ENCODE measurements at regions of chr5 and their contacts with region 1.

Region 1: GRCh38 chr5:42057254-42057690 is 132.2 kb downstream of the FBXO4 start:
- DNase-seq: peak; percentile 66
- H3K4me3 Mint-ChIP-seq: no peak overlapping the region
- H3K27ac Mint-ChIP-seq: no peak overlapping the region
- H3K4me1 Mint-ChIP-seq: peaks cover 8% of the 10 kb centered on the region
- H3K27me3 Mint-ChIP-seq: no peaks in the 10 kb centered on the region
- CTCF ChIP-seq: peak; percentile 53

Region 2: GRCh38 chr5:41856644-41857491 is 200.4 kb before region 1 on chr5:
- CTCF ChIA-PET with region 1: interaction called, 32 read pairs
- intact Hi-C with region 1: loop called (anchors 1 kb)
- DNase-seq: peak; percentile 60
- H3K4me3 Mint-ChIP-seq: no peak overlapping the region
- H3K27ac Mint-ChIP-seq: no peak overlapping the region
- H3K4me1 Mint-ChIP-seq: no peaks in the 10 kb centered on the region
- H3K27me3 Mint-ChIP-seq: no peaks in the 10 kb centered on the region
- CTCF ChIP-seq: peak; percentile 46

Region 3: DNA sequence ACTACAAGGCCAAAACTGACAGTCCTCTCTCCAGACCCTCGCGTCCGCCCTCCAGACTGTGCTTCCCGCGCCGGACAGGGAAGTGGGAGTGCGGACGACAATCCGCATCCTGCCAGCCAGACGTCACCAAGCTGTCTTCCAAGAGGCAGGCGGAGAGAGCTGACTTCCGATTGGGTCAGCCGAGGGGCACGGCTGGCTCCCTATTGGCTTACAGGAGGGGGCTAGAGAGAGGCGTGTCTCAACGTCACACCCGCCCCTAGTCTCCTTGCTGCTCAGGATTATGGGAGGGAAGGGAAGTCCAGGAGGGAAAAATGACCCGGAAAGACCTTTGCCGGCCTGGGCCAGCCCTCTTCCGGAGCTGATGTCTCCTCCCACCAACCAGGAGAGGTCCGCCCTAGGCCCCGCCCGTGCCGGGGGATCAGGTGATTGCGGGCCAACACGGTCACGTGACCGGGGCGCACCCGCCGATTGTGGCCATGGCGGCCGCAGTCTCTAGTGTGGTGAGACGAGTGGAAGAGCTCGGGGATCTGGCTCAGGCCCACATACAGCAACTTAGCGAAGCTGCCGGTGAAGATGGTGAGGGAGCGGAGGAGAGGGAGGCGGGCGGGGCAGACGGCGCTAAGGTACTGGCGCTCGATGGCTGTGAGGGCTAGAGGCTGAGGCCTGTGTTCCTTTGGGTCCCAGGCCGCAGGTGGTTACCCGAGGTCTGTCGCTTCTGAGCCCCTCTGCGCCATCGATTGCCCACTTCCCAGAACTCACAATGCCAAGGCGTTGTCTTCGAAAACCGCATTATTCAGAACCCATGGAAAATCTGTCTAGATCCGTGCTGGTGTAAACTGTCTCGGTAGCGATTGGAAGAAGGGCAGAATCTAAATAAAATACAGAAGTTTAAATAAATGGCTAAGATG is 153.1 kb before region 1 on chr5 and contains the start of gene RIMOC1:
- CTCF ChIA-PET with region 1: interaction called, 12 read pairs
- intact Hi-C with region 1: no loop called
- DNase-seq: peak; percentile 98
- H3K4me3 Mint-ChIP-seq: peak within 1 kb of the TSS; percentile 88
- H3K27ac Mint-ChIP-seq: peak within 1 kb of the TSS; percentile 99
- H3K4me1 Mint-ChIP-seq: peaks cover 20% of the 10 kb centered on the region
- H3K27me3 Mint-ChIP-seq: no peaks in the 10 kb centered on the region
- CTCF ChIP-seq: no peak
- total RNA-seq, gene RIMOC1: 27.6 and 28.5 TPM in 2 replicates

Region 4: DNA sequence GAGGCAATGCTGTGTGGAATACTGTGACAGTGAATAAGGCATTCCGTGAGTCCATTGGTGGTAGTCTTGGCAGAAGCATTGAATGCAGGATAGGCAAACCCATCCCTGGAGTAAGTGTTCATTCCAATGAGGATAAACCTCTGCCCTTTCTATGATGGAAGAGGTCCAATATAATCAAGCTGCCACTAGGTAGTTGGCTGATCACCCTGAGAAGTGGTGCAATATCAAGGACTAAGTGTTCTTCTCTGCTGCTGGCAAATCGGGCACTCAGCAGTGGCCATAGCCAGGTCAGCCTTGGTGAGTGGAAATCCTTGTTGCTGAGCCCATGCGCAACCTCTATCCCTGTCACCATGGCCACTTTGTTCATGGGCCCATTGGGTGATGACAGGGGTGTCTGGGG is 62.1 kb before region 1 on chr5:
- CTCF ChIA-PET with region 1: no interaction called
- intact Hi-C with region 1: no loop called
- DNase-seq: no peak
- H3K4me3 Mint-ChIP-seq: no peak overlapping the region
- H3K27ac Mint-ChIP-seq: no peak overlapping the region
- H3K4me1 Mint-ChIP-seq: no peaks in the 10 kb centered on the region
- H3K27me3 Mint-ChIP-seq: peaks cover 11% of the 10 kb centered on the region
- CTCF ChIP-seq: no peak

Region 5: GRCh38 chr5:42005561-42006153 is 51.6 kb before region 1 on chr5:
- CTCF ChIA-PET with region 1: interaction called, 12 read pairs
- intact Hi-C with region 1: loop called (anchors 2 kb)
- DNase-seq: no peak
- H3K4me3 Mint-ChIP-seq: no peak overlapping the region
- H3K27ac Mint-ChIP-seq: no peak overlapping the region
- H3K4me1 Mint-ChIP-seq: no peaks in the 10 kb centered on the region
- H3K27me3 Mint-ChIP-seq: no peaks in the 10 kb centered on the region
- CTCF ChIP-seq: peak; percentile 71

Measured in Calu3 (cell line).